ENCODE measurements at regions of chrX and their contacts with region 1.

Region 1: GRCh38 chrX:38260231-38260630 is 39.6 kb upstream of the SRPX start:
- H3K4me3 ChIP-seq: no peak overlapping the region
- H3K27ac ChIP-seq: no peak overlapping the region
- H3K4me1 ChIP-seq: no peaks in the 10 kb centered on the region
- CTCF ChIP-seq: no peak

Region 2: DNA sequence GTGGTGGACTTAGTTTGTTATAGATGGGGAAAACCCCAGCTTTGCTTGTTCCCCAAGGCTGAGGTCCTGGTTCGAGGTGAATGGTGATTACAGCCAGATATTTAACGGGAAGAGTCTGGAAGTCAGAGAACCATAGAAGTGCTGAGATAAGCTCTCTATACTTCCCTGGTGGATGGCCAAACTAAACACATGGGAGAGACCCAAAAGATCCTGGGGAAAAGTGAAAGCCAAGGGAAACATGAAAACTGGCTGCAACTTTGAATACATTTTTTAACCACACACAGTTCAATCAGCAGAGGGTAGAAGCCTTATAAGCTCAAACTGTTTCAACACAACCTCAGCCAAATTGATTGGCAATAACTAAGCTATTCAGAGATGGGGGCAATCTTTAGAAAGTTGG is 10.3 kb before region 1 on chrX:
- CTCF ChIA-PET with region 1: interaction called, 11 read pairs
- POLR2A ChIA-PET with region 1: no interaction called
- H3K4me3 ChIP-seq: no peak overlapping the region
- H3K27ac ChIP-seq: no peak overlapping the region
- H3K4me1 ChIP-seq: peaks cover 3% of the 10 kb centered on the region; the same call in 1 of the 2 replicates
- CTCF ChIP-seq: no peak

Region 3: GRCh38 chrX:38271154-38271716 is 11.0 kb after region 1 on chrX:
- CTCF ChIA-PET with region 1: interaction called, 18 read pairs
- POLR2A ChIA-PET with region 1: no interaction called
- H3K4me3 ChIP-seq: no peak overlapping the region
- H3K27ac ChIP-seq: no peak overlapping the region
- H3K4me1 ChIP-seq: no peaks in the 10 kb centered on the region
- CTCF ChIP-seq: no peak

Region 4: GRCh38 chrX:38327007-38327774 is 67.0 kb after region 1 on chrX and contains the start of gene RPGR:
- CTCF ChIA-PET with region 1: interaction called, 25 read pairs
- POLR2A ChIA-PET with region 1: no interaction called
- H3K4me3 ChIP-seq: peak within 1 kb of the TSS; percentile 80
- H3K27ac ChIP-seq: peak within 1 kb of the TSS; percentile 47
- H3K4me1 ChIP-seq: no peaks in the 10 kb centered on the region; the same call in 1 of the 2 replicates
- CTCF ChIP-seq: peak; percentile 96